Common myeloid progenitor, CD34-positive (primary cell): ENCODE measurements at regions of chr9 and their contacts with region 1.

Region 1: DNA sequence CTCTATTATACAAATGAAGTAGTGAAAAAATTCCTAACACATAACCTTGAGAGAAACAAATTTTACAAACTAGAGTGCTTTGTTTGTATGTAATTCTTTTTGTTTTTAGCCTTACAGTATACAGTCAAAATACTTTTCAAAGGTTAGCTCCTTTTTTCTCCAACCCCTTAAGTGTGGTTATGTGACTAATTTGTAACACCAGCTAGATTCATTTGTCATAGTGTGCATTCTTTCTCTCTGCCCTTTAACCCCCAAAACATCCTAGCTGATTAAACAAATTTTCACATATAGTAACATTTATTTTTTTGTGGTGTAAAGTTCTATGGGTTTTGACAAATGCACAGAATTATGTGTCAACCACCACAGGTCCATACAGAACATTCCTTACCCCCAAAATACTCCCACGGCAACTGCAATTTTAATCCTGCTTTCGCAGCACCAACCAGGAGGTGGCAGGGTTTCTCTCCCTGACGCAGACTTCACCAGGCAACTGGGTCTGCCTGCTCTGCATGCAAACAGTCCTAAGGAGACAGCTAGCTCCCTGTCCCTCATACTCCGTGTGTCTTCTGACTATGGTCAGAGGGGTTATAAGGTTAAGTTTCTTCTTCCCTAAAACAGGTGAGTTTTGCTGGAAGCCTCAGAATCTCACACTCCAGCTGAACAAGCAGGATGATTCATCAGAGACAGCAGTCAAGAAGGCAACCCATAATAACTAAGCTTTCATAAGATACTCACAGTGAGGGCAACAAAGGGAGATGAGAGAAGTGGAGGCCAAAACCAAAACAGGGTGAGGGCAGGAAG is 44.5 kb upstream of the NR5A1 start:
- DNase-seq: peak; percentile 52 to 71 (median 69)
- H3K4me3 ChIP-seq: no peak overlapping the region
- H3K27ac ChIP-seq: no peak overlapping the region
- H3K4me1 ChIP-seq: peaks cover 11 to 42% (median 28%) of the 10 kb centered on the region in 4 experiments
- H3K27me3 ChIP-seq: no peaks in the 10 kb centered on the region

Region 2: GRCh38 chr9:124453586-124454191 is 98.0 kb before region 1 on chr9:
- CTCF ChIA-PET with region 1: no interaction called
- POLR2A ChIA-PET with region 1: no interaction called
- DNase-seq: peak in 2 of 3 donors; percentile 50 to 56
- H3K4me3 ChIP-seq: peak overlapping the region in 2 of 7 experiments; percentile 49 to 51
- H3K27ac ChIP-seq: no peak overlapping the region
- H3K4me1 ChIP-seq: peaks cover 0 to 20% (median 10%) of the 10 kb centered on the region in 4 experiments
- H3K27me3 ChIP-seq: peaks cover 0 to 49% (median 21%) of the 10 kb centered on the region in 5 experiments

Region 3: GRCh38 chr9:124518116-124518515 is 33.6 kb before region 1 on chr9:
- CTCF ChIA-PET with region 1: no interaction called
- POLR2A ChIA-PET with region 1: no interaction called
- DNase-seq: no peak
- H3K4me3 ChIP-seq: no peak overlapping the region
- H3K27ac ChIP-seq: no peak overlapping the region
- H3K4me1 ChIP-seq: peaks cover 2 to 19% (median 17%) of the 10 kb centered on the region in 4 experiments
- H3K27me3 ChIP-seq: no peaks in the 10 kb centered on the region

Region 4: DNA sequence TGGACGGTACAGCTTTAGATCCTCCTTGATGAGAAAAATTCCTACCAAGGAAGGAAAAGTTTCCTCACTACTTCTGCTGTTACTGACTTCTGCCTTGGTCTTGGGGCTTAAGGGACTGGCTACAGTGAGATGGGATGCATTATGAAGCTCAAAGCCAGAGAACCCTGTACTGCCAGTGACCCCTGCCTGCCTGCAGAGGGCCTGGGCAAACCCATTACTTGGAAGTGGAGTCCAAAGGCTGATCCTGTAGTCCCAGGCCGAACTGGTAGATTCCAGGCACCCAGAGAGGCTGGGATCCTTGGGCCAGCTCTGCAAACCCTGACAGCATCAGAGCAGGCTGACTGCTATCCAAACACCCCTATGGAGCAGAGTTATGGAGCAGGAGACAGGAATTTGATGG is 18.8 kb before region 1 on chr9:
- CTCF ChIA-PET with region 1: interaction called, 33 read pairs
- POLR2A ChIA-PET with region 1: no interaction called
- DNase-seq: no peak
- H3K4me3 ChIP-seq: no peak overlapping the region
- H3K27ac ChIP-seq: no peak overlapping the region
- H3K4me1 ChIP-seq: peaks cover 0 to 2% (median 0%) of the 10 kb centered on the region in 4 experiments
- H3K27me3 ChIP-seq: no peaks in the 10 kb centered on the region

Region 5: GRCh38 chr9:124567362-124567761 is 15.7 kb after region 1 on chr9:
- CTCF ChIA-PET with region 1: interaction called, 19 read pairs
- POLR2A ChIA-PET with region 1: no interaction called
- DNase-seq: no peak
- H3K4me3 ChIP-seq: no peak overlapping the region
- H3K27ac ChIP-seq: no peak overlapping the region
- H3K4me1 ChIP-seq: no peaks in the 10 kb centered on the region
- H3K27me3 ChIP-seq: no peaks in the 10 kb centered on the region